Psoas muscle (tissue), 8 donors: ENCODE measurements at regions of chr10 and their contacts with region 1.

Region 1: DNA sequence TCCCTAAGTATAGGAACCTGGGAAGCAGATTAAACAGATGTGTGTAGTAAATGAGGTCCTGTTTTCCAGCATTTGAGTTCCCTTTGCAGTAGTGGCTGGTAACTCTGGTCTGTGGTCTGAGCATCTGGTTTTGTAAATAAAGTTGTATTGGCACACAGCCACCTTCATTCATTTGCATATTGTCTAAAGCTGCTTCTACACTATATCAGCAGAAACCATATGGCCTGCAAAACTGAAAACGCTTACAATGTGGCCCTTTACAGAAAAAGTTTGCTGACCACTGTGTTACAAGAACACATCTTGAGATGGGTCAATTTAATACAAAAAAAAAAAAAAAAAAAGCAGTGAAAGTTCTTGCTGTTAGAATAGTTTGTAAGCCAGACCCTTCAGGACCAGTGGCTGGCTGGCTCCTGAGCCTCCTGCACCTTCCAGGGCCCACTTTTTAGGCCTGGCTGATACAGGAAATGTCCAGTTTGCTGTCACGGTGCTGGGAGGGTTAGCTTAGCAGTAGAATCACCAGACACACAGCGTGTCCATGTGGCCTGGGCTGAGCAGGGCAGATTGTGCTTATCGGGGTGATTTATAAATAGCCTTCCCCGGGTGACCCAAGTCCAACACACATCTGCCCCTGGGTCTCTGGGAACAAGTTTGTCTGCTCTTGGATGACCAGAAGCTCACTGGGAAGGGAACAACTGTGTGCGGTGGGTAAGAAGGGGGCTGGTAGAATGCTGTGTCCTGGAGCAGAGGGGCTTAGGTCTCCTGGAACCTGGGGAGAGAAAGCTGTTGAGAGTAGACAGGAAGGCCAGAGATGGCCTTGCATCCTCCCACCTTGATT is 1.4 kb downstream of the C10orf71 start:
- DNase-seq: peak; percentile 37 to 84
- ATAC-seq: peak; percentile 52 to 71 (median 70)
- H3K4me3 ChIP-seq: peak overlapping the region; percentile 80
- H3K27ac ChIP-seq: peak overlapping the region; percentile 99
- H3K4me1 ChIP-seq: peaks cover 67% of the 10 kb centered on the region
- H3K27me3 ChIP-seq: no peaks in the 10 kb centered on the region
- CTCF ChIP-seq: no peak

Region 2: GRCh38 chr10:49220031-49220430 is 80.3 kb before region 1 on chr10:
- intact Hi-C with region 1: loop called (anchors 5 to 10 kb)
- DNase-seq: no peak
- ATAC-seq: no peak
- H3K4me3 ChIP-seq: no peak overlapping the region
- H3K27ac ChIP-seq: no peak overlapping the region
- H3K4me1 ChIP-seq: no peaks in the 10 kb centered on the region
- H3K27me3 ChIP-seq: no peaks in the 10 kb centered on the region
- CTCF ChIP-seq: no peak

Region 3: DNA sequence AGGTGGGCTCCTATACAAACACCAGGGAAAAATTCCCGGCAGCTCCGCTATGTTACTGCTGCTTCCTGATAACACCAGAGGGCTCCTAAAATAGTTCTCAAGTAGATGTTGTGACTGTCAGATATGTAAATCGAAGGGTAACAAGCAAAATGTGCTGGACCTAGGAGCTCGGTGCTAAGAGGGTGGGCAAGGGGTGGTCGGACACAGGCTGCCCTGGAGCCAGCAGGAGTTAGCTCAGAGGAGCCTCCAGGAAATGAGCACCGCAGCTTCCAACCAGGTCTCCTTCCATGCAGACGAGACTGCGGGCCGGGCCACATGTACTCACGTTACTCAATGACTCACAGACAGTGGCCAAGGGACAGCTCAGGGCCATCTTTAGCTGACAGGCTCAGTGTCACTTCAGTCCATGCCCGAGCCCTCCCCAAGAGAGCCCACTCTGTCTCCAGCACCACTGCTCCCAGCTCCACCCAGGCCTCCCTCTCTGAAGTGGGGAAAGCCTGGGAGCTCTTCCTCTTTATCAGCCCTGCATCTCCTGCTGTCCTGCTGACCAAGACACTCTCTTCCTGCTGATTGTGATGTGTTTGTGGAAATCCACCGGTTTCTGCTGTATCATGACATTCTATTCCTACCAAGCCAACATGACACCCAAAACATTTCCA is 75.0 kb before region 1 on chr10:
- intact Hi-C with region 1: loop called (anchors 5 to 10 kb)
- DNase-seq: peak; percentile 49 to 77
- ATAC-seq: peak; percentile 96 to 99 (median 98)
- H3K4me3 ChIP-seq: no peak overlapping the region
- H3K27ac ChIP-seq: peak overlapping the region; percentile 51
- H3K4me1 ChIP-seq: peaks cover 6% of the 10 kb centered on the region
- H3K27me3 ChIP-seq: no peaks in the 10 kb centered on the region
- CTCF ChIP-seq: no peak

Region 4: DNA sequence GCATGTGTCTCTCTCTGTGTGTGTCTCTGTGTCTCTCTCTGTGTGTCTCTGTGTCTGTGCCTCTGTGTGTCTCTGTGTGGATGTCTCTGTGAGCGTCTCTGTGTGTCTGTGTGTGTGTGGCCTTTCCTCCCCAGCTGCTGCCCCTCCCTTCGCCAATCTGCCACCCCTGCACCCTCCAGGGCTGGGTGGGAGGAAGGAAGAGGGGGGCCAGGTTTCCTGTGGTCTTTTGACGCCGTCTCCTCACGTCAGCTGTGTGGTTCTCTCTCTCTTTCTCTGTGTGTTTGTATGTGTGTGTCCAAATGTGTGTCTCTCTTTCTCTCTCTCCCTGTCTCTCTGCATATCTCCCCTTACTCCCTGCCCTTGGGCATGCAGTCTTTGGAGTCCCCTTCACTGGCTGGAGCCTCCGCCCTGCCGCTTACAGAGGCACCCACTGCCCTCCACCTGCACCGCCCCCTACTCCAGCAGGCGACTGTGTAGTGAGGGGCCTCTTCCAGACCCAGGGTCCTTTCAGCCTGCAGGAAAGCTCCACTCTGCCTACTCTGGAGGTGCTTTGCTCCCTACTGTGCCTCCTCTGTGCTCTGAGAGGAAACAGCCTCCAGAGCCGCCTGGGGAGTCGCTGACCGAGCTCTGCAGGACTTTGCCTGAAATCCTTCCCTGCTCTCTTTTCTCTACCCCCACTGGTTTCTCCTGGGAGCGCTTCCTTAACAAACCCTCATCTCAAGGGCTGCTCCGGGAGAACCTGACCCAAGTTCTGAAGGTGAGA is 45.6 kb before region 1 on chr10:
- intact Hi-C with region 1: no loop called
- DNase-seq: no peak
- ATAC-seq: no peak
- H3K4me3 ChIP-seq: no peak overlapping the region
- H3K27ac ChIP-seq: no peak overlapping the region
- H3K4me1 ChIP-seq: no peaks in the 10 kb centered on the region
- H3K27me3 ChIP-seq: no peaks in the 10 kb centered on the region
- CTCF ChIP-seq: no peak

Region 5: DNA sequence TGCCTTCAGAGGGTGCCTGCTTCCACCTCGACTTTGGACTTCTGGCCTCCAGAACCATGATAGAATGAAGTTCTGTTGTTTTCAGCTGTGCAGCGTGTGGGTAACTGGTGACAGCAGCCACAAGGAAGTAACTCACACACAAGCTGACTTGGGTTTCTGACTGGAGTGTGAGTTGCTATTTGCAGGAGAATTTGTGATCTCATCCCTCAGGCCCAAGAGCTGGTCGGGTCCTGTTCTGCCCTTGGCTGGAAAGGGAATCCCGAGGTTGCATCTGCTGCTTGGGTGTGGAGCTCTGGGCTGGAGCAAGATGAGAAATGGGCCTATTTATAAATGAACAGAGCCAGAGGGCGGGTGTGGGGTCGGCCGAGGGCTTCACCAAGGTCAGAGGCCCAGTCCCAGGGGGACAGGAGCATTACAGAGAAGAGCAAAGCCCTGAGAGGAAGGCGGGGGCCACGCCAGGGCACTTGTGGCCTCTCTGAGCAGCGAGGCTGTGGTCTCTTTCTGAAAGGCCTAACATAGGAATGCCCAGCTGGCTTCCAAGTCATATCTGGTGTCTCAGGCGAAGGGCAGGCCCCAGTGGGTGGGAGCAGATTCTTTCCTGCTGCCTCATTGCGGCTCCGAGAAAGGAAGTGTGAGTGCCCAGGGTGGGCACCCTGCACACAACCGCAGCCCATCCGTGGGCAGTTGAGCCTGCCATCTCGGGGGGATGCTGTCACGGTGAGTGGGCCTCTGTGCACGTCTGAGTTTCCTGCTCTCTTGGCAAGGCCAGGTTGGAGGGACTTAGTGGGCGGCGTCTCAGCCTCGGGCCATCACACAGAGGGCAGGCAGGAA is 27.9 kb before region 1 on chr10:
- intact Hi-C with region 1: loop called (anchors 1 to 5 kb)
- DNase-seq: peak; percentile 66 to 90
- ATAC-seq: peak; percentile 87 to 92 (median 88)
- H3K4me3 ChIP-seq: peak overlapping the region; percentile 28
- H3K27ac ChIP-seq: peak overlapping the region; percentile 99
- H3K4me1 ChIP-seq: peaks cover 40% of the 10 kb centered on the region
- H3K27me3 ChIP-seq: no peaks in the 10 kb centered on the region
- CTCF ChIP-seq: no peak